Endothelial cell of umbilical vein (primary cell): ENCODE measurements at regions of chr11 and their contacts with region 1.

Region 1: GRCh38 chr11:66386171-66387069 is 14.9 kb upstream of the SLC29A2 start:
- DNase-seq: peak; percentile 77
- H3K4me3 ChIP-seq: no peak overlapping the region
- H3K27ac ChIP-seq: no peak overlapping the region
- H3K4me1 ChIP-seq: peaks cover 3% of the 10 kb centered on the region
- H3K27me3 ChIP-seq: peaks cover 4 to 8% of the 10 kb centered on the region in 2 experiments
- CTCF ChIP-seq: peak; percentile 90 to 97
- POLR2A ChIP-seq: no peak

Region 2: DNA sequence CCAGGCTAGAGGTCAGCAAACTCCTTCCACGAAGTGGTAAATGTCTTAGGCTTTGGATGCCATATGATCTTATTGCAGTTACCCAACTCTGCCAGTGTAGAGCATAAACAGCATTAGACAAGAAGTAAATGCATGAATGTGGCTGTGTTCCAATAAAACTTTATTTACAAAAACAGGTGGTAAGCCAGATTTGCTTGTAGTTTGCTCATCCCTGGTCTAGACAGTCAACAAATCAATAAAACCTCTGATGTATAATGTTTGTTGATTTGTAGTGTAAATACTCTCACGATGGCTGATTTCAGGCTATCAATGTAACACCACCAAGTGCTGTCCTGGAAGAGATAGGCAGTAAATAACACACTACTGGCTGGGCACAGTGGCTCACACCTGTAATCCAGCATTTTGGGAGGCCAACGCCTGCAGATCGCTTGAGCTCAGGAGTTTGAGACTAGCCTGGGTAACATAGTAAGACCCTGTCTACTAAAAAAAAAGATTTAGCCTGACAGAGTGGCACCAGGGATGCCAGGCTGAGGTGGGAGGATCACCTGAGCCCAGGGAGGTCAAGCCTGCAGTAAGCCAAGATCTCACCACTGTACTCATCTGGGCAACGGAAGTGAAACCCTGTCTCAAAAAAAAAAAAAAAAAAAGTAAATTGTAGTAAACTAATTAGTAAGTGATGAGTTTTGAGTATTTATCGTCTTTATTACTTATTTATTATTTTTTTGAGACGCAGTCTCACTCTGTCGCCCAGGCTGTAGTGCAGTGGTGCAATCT is 353.3 kb before region 1 on chr11:
- CTCF ChIA-PET with region 1: no interaction called
- POLR2A ChIA-PET with region 1: no interaction called
- dilution Hi-C with region 1: no loop called
- intact Hi-C with region 1: no loop called
- DNase-seq: no peak
- H3K4me3 ChIP-seq: no peak overlapping the region
- H3K27ac ChIP-seq: no peak overlapping the region
- H3K4me1 ChIP-seq: no peaks in the 10 kb centered on the region
- H3K27me3 ChIP-seq: peaks cover 0 to 10% of the 10 kb centered on the region in 2 experiments
- CTCF ChIP-seq: no peak
- POLR2A ChIP-seq: no peak

Region 3: GRCh38 chr11:66336234-66337102 is 50.0 kb before region 1 on chr11 and contains the start of gene RIN1:
- CTCF ChIA-PET with region 1: interaction called, 11 read pairs
- POLR2A ChIA-PET with region 1: no interaction called
- dilution Hi-C with region 1: no loop called
- intact Hi-C with region 1: no loop called
- DNase-seq: peak; percentile 85
- H3K4me3 ChIP-seq: peak within 1 kb of the TSS; percentile 12 to 54 (median 48)
- H3K27ac ChIP-seq: peak within 1 kb of the TSS; percentile 91
- H3K4me1 ChIP-seq: peaks cover 18% of the 10 kb centered on the region
- H3K27me3 ChIP-seq: no peaks in the 10 kb centered on the region
- CTCF ChIP-seq: peak in 1 of 2 donors; percentile 3
- POLR2A ChIP-seq: peak; percentile 87
- total RNA-seq, gene RIN1: 9.1 and 10.2 TPM in 2 replicates

Region 4: DNA sequence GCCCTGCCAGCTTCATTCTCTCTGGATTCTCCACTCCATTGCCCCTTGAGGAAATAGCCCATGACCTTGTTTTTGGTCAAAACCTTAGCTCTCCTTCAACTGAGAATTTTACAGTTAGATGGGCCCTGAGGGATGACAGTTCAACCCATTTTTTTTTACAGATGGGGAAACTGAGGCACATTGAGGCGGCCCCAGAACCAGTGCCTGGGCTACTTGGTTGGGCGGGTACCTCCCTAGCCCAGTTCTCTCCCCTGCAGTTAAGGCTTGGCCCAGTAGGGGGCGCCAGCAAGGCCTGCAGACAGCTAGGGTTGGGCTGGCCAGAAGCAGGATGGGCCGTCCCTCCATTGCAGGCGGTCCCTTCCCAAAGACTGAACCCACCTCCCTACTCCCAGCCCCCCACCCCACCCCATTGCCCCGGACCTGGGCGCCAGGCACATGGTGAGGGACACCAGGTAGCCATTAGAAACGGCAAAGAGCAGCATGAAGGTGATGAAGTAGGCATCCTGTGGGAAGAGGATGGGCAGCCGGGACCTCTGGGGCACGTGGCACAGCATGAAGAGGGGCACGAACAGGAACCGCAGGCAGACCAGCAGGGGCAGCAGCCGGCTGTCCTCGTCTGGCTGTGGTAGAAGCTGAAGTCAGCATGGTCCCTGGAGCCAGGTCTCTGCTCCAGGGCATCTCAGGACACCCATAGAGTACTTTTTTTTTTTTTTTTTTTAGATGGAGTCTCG is 22.4 kb before region 1 on chr11:
- CTCF ChIA-PET with region 1: interaction called, 11 read pairs
- POLR2A ChIA-PET with region 1: no interaction called
- dilution Hi-C with region 1: no loop called
- intact Hi-C with region 1: no loop called
- DNase-seq: no peak
- H3K4me3 ChIP-seq: no peak overlapping the region
- H3K27ac ChIP-seq: no peak overlapping the region
- H3K4me1 ChIP-seq: no peaks in the 10 kb centered on the region
- H3K27me3 ChIP-seq: no peaks in the 10 kb centered on the region
- CTCF ChIP-seq: peak; percentile 67 to 81
- POLR2A ChIP-seq: no peak

Region 5: GRCh38 chr11:66371627-66372415 is 14.6 kb before region 1 on chr11 and contains the start of gene SLC29A2:
- CTCF ChIA-PET with region 1: interaction called, 65 read pairs
- POLR2A ChIA-PET with region 1: no interaction called
- dilution Hi-C with region 1: no loop called
- intact Hi-C with region 1: no loop called
- DNase-seq: no peak
- H3K4me3 ChIP-seq: peak within 1 kb of the TSS; percentile 41 to 47 (median 45)
- H3K27ac ChIP-seq: no peak within 1 kb of the TSS
- H3K4me1 ChIP-seq: peaks cover 7% of the 10 kb centered on the region
- H3K27me3 ChIP-seq: peaks cover 10 to 16% of the 10 kb centered on the region in 2 experiments
- CTCF ChIP-seq: no peak
- POLR2A ChIP-seq: no peak
- total RNA-seq, gene SLC29A2: 4.8 and 5.2 TPM in 2 replicates

Region 6: GRCh38 chr11:66421492-66422205 is 35.2 kb after region 1 on chr11:
- CTCF ChIA-PET with region 1: interaction called, 16 read pairs
- POLR2A ChIA-PET with region 1: no interaction called
- dilution Hi-C with region 1: no loop called
- intact Hi-C with region 1: no loop called
- DNase-seq: peak; percentile 88
- H3K4me3 ChIP-seq: no peak overlapping the region
- H3K27ac ChIP-seq: no peak overlapping the region
- H3K4me1 ChIP-seq: no peaks in the 10 kb centered on the region
- H3K27me3 ChIP-seq: peaks cover 13 to 17% of the 10 kb centered on the region in 2 experiments
- CTCF ChIP-seq: no peak
- POLR2A ChIP-seq: no peak

Region 7: GRCh38 chr11:66429983-66430602 is 43.7 kb after region 1 on chr11:
- CTCF ChIA-PET with region 1: interaction called, 30 read pairs
- POLR2A ChIA-PET with region 1: no interaction called
- dilution Hi-C with region 1: no loop called
- intact Hi-C with region 1: no loop called
- DNase-seq: peak; percentile 45
- H3K4me3 ChIP-seq: no peak overlapping the region
- H3K27ac ChIP-seq: no peak overlapping the region
- H3K4me1 ChIP-seq: no peaks in the 10 kb centered on the region
- H3K27me3 ChIP-seq: no peaks in the 10 kb centered on the region
- CTCF ChIP-seq: peak; percentile 86 to 94
- POLR2A ChIP-seq: no peak

Region 8: GRCh38 chr11:66438504-66439466 is 52.4 kb after region 1 on chr11 and contains the start of gene MRPL11:
- CTCF ChIA-PET with region 1: interaction called, 13 read pairs
- POLR2A ChIA-PET with region 1: no interaction called
- dilution Hi-C with region 1: no loop called
- intact Hi-C with region 1: no loop called
- DNase-seq: peak; percentile 95
- H3K4me3 ChIP-seq: peak within 1 kb of the TSS; percentile 59 to 80 (median 64)
- H3K27ac ChIP-seq: peak within 1 kb of the TSS; percentile 77
- H3K4me1 ChIP-seq: peaks cover 6% of the 10 kb centered on the region
- H3K27me3 ChIP-seq: no peaks in the 10 kb centered on the region
- CTCF ChIP-seq: peak; percentile 70 to 77
- POLR2A ChIP-seq: no peak
- total RNA-seq, gene MRPL11: 69.1 and 72.1 TPM in 2 replicates

Region 9: GRCh38 chr11:66510271-66510989 is 124.0 kb after region 1 on chr11 and contains the start of gene BBS1:
- CTCF ChIA-PET with region 1: no interaction called
- POLR2A ChIA-PET with region 1: no interaction called
- dilution Hi-C with region 1: no loop called
- intact Hi-C with region 1: no loop called
- DNase-seq: peak; percentile 84
- H3K4me3 ChIP-seq: peak within 1 kb of the TSS; percentile 56 to 91 (median 89)
- H3K27ac ChIP-seq: peak within 1 kb of the TSS; percentile 34
- H3K4me1 ChIP-seq: peaks cover 5% of the 10 kb centered on the region
- H3K27me3 ChIP-seq: no peaks in the 10 kb centered on the region
- CTCF ChIP-seq: no peak
- POLR2A ChIP-seq: peak; percentile 82
- total RNA-seq, gene BBS1: 29.5 and 32.9 TPM in 2 replicates